Activated CD8-positive, alpha-beta T cell treated with anti-CD3 and anti-CD28 coated beads, Interleukin-2, amount 10 ng/mL, durations not matched to agents 7 days and 5 days (primary cell): ENCODE measurements at regions of chr1 and their contacts with region 1.

Region 1: GRCh38 chr1:152459596-152460528 is 45.8 kb upstream of the CRNN start:
- DNase-seq: peak; percentile 82
- ATAC-seq: peak; percentile 93
- H3K4me3 Mint-ChIP-seq: peak overlapping the region; percentile 19
- H3K27ac Mint-ChIP-seq: peak overlapping the region; percentile 84
- H3K4me1 Mint-ChIP-seq: peaks cover 32% of the 10 kb centered on the region
- H3K27me3 Mint-ChIP-seq: peaks cover 2% of the 10 kb centered on the region

Region 2: DNA sequence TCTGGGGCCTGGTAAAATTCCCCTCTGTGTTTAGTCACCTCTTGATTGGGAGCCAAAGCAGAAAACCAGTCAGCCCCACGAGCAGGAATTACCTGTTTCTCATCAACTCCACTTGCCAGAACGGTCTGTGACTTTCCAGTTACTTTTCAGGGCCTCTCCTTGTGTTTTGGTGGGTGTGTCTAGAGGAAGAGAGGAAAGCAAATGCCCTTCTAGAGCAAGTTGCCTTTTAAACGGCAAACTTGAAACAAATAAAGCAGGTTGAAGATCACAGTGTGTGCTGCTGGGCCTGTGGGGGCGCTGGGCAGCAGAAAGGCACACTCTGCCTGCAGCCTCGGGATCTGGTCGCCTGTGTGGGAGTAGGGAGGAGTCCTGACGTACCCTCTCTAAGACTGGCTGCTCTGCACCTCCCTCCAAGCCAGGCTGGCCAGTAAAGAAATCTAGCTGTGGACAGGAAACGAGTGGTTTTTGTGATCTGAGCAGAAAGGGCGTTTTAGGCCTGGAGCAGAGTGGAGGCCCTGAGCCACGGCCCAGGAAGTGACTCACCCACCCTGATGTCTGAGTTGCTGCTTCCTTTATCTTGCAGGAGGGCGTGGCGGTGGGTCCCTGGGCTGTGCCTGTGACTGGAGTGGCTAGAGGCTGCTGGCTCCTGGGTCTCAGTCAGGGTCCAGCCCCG is 412.0 kb before region 1 on chr1:
- CTCF ChIA-PET with region 1: interaction called, 27 read pairs
- POLR2A ChIA-PET with region 1: interaction called, 3 read pairs
- DNase-seq: peak; percentile 94
- ATAC-seq: peak; percentile 93
- H3K4me3 Mint-ChIP-seq: peak overlapping the region; percentile 73
- H3K27ac Mint-ChIP-seq: peak overlapping the region; percentile 96
- H3K4me1 Mint-ChIP-seq: peaks cover 39% of the 10 kb centered on the region
- H3K27me3 Mint-ChIP-seq: peaks cover 6% of the 10 kb centered on the region

Region 3: DNA sequence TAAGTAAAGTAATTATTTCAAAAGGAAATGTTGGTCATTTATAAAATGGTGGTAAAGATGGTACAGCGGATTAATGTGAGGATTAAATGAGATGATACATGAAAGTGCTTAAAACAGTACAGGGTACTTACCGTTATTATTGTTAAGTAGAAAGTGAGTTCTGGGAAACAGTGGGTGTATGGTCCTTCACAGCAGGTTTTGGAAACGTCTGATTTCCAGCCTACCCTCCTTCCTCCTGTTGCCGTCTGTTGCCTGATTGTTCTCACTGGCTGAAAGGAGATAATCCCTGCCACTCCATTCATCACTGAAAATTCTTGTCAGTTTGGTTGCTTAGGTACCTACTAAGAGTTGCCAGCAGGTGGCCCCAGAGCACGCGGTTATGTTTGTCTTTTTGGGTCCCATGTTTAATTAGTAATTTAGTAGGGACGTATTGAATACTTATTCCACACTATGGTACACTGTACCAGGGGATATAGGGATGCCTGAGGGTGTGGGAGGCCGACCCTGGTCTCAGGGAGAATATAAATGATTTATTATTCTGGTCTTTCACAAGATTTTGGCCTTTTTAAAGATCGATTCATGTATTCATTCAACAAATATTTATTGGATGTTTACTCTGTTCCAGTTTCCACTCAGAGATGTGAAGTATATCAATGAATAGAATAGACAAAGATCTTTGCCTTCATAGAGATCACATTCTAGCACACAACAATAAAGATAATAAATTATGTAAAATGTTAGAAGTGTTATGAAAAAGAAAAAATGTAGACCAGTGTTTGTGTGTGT is 270.0 kb before region 1 on chr1:
- CTCF ChIA-PET with region 1: interaction called, 191 read pairs
- POLR2A ChIA-PET with region 1: no interaction called
- DNase-seq: peak; percentile 77
- ATAC-seq: peak; percentile 57
- H3K4me3 Mint-ChIP-seq: peak overlapping the region; percentile 66
- H3K27ac Mint-ChIP-seq: no peak overlapping the region
- H3K4me1 Mint-ChIP-seq: peaks cover 6% of the 10 kb centered on the region
- H3K27me3 Mint-ChIP-seq: peaks cover 12% of the 10 kb centered on the region

Region 4: DNA sequence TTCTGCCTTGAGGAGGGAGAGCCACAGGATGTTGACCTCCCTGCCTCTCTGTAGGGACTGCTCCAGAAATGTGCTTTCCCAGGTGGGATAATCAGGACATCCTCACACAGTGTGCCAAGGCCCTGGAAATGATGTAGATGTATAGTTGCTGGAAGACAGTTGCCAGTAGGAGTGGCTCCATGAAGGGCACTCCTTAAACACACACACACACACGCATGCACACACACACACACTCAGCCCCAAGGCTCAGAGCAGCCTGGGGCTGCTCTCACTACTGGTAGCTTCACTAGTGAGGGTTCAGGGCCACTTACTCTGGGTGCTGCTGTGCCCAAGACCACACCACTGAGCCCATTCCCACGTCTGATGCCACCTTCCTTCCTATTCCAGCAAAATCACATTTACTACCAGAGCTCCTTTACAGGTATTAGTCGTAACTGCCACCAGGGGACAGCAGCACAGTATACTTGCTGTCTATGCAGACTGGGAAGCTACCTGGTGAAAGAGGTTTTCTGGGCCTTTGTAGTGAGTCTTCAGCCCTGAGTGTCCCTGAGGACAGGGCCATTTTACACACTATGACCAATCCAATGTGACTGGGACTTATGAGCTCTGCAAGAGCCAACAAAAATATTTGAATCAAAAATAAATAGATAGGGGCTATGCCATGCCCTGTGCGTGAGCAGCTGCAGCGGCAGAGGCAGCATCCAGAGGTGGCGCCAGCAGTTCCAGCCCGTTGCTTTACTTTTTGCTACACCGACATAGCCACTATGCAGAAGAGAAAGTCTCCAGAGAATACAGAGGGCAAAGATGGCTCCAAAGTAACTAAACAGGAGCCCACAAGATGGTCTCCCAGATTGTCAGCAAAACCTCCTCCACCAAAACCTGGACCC is 60.8 kb before region 1 on chr1:
- CTCF ChIA-PET with region 1: interaction called, 39 read pairs
- POLR2A ChIA-PET with region 1: no interaction called
- DNase-seq: peak; percentile 28
- ATAC-seq: no peak
- H3K4me3 Mint-ChIP-seq: no peak overlapping the region
- H3K27ac Mint-ChIP-seq: no peak overlapping the region
- H3K4me1 Mint-ChIP-seq: no peaks in the 10 kb centered on the region
- H3K27me3 Mint-ChIP-seq: peaks cover 11% of the 10 kb centered on the region

Region 5: GRCh38 chr1:152448095-152448494 is 11.8 kb before region 1 on chr1:
- CTCF ChIA-PET with region 1: interaction called, 62 read pairs
- POLR2A ChIA-PET with region 1: no interaction called
- DNase-seq: peak; percentile 21
- ATAC-seq: peak; percentile 51
- H3K4me3 Mint-ChIP-seq: no peak overlapping the region
- H3K27ac Mint-ChIP-seq: no peak overlapping the region
- H3K4me1 Mint-ChIP-seq: no peaks in the 10 kb centered on the region
- H3K27me3 Mint-ChIP-seq: peaks cover 8% of the 10 kb centered on the region